Motor neuron (in vitro differentiated cells): ENCODE measurements at regions of chr1 and their contacts with region 1.

Region 1: GRCh38 chr1:25343872-25344271 is 5.7 kb downstream of the TMEM50A start:
- ATAC-seq: peak in 2 of 8 experiments; percentile 24 to 64
- H3K4me3 ChIP-seq: no peak overlapping the region
- H3K27ac ChIP-seq: no peak overlapping the region
- H3K4me1 ChIP-seq: peaks cover 3 to 14% of the 10 kb centered on the region in 2 donors

Region 2: GRCh38 chr1:25239681-25240541 is 104.0 kb before region 1 on chr1:
- in situ Hi-C with region 1: no loop called
- ATAC-seq: peak; percentile 86 to 93 (median 91)
- H3K4me3 ChIP-seq: peak overlapping the region; percentile 30 to 48 (median 41)
- H3K27ac ChIP-seq: peak overlapping the region; percentile 81 to 83
- H3K4me1 ChIP-seq: peaks cover 6 to 14% of the 10 kb centered on the region in 2 donors

Region 3: GRCh38 chr1:25253911-25254310 is 90.0 kb before region 1 on chr1:
- in situ Hi-C with region 1: loop called in 1 of 9 experiments (anchors 10 kb)
- ATAC-seq: peak in 2 of 8 experiments; percentile 39 to 46
- H3K4me3 ChIP-seq: no peak overlapping the region
- H3K27ac ChIP-seq: no peak overlapping the region
- H3K4me1 ChIP-seq: no peaks in the 10 kb centered on the region